Activated CD8-positive, alpha-beta T cell treated with anti-CD3 and anti-CD28 coated beads, Interleukin-2, amount 10 ng/mL, durations not matched to agents 7 days and 5 days (primary cell): ENCODE measurements at regions of chr22 and their contacts with region 1.

Region 1: GRCh38 chr22:24803011-24803542 is 2.9 kb upstream of the SGSM1 start:
- DNase-seq: peak; percentile 63
- ATAC-seq: no peak
- H3K4me3 Mint-ChIP-seq: no peak overlapping the region
- H3K27ac Mint-ChIP-seq: no peak overlapping the region
- H3K4me1 Mint-ChIP-seq: peaks cover 7% of the 10 kb centered on the region
- H3K27me3 Mint-ChIP-seq: peaks cover 6% of the 10 kb centered on the region

Region 2: DNA sequence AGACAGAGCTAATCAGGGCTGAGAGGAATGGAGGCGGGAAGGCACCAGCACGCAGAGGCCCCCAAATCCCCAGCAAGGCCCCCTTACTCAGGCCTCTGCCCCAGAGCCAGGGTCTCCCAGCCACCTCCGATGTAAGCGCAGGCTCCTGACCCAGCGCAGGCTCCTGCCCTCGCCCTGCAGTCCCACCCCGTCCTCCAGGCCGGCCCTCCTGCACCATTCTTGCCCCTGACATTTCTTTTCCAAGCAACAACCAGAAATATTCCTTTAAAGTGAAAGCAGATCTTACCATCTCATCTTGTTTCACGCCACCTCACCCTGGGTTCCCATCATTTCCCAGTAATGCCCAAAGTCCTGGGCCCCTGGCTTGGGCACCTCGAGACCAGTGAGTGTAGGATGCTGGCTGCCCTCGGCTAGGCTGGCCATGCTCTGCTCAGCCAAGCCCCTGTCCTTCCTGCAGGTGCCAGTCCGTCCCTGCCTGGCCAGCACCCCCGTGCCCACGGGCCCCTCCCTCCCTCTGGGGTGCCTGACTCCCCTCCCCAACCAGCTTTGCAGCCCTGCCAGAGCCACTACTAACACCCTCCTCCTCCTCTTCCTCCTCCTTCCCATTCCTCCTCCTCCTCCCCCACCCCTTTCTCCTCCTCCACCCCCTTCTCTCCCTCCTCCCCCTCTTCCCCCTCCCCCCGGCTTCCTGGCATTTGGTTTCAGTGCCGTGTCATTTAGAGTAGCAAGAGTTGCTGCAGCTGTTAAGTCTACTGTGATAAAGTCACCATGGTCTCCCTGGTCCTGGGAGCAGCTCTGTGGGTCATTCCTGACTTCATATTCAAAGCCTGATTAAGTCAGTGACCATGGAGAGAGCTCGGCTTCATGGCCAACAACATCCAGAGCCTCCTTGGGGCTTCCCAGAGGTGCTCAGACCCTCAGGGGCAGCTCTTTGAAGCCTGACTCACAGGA is 107.2 kb before region 1 on chr22:
- CTCF ChIA-PET with region 1: no interaction called
- POLR2A ChIA-PET with region 1: no interaction called
- DNase-seq: no peak
- ATAC-seq: no peak
- H3K4me3 Mint-ChIP-seq: no peak overlapping the region
- H3K27ac Mint-ChIP-seq: no peak overlapping the region
- H3K4me1 Mint-ChIP-seq: no peaks in the 10 kb centered on the region
- H3K27me3 Mint-ChIP-seq: peaks cover 8% of the 10 kb centered on the region

Region 3: DNA sequence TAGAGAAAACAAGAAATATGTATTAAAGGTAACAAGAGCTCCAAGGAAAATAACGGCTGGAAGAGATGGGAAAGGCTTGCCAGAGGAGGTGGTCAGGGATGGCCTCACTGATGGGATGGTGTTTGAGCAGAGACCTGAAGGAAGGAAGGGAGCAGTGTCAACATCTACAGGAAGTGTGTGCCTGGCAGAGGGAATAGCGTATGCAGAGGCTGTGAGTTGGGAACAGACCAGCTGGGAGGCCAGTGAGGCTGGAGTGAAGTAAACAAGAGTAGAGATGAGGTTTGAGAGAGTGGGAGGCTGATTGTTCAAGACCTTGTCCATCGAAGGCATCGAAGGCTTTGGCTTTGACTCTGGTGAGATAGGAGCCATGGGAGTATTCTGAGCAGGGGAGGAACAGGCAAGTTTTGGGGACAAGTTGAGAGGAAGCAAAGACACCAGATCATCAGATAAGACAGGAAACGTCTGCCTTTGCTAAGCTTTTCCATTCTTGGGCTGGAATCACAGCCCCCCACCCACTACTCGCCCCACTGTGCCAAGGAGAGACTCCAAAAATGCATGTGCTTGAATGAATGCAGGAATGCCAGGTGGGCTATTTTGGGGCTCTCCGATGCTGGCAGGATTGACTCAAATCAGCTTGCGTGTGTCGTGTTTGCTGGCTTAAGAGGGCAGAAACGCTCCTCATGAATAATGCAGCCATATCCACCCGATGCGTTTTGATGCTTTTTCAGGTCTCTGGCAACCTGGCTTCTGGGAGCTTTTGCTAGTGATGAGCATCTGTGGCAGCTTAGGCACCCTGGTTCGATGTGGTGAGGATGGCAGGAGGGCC is 10.1 kb after region 1 on chr22:
- CTCF ChIA-PET with region 1: interaction called, 22 read pairs
- POLR2A ChIA-PET with region 1: no interaction called
- DNase-seq: no peak
- ATAC-seq: no peak
- H3K4me3 Mint-ChIP-seq: no peak overlapping the region
- H3K27ac Mint-ChIP-seq: no peak overlapping the region
- H3K4me1 Mint-ChIP-seq: no peaks in the 10 kb centered on the region
- H3K27me3 Mint-ChIP-seq: peaks cover 2% of the 10 kb centered on the region